Dorsolateral prefrontal cortex (tissue), 120 donors: ENCODE measurements at regions of chr16 and their contacts with region 1.

Region 1: DNA sequence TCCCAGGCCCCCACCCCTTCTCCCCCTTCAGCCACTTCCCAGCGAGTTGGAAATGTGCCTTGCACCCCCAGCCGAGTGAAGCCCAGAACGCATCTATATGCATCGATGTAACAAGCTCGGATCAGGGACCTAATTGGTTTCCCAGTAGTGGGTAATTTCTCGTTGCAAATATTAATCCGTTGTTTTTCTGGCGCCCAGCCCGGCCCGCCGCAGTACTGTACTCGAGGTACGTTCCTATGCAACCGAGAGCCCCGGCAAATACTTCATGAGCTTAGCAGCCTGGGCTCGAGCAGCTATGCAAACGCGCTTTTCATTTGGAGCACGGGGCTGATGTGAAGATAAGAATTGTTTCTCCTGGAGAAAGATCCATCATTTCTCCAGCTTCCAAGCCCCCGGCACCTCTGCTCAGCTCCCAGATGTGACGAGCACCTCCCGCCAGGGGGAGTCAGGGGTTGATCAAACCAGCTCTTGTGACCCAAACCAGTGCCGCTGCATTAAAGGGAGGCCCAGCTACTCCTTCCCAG is 229.8 kb downstream of the KATNIP start:
- DNase-seq: peak in 9 of 10 donors; percentile 56 to 78 (median 69)
- H3K4me3 ChIP-seq: peak overlapping the region in 7 of 59 donors; percentile 2 to 36 (median 7)
- H3K27ac ChIP-seq: peak overlapping the region in 54 of 59 donors; percentile 3 to 84 (median 60)
- H3K27me3 ChIP-seq: no peaks in the 10 kb centered on the region
- CTCF ChIP-seq: peak in 54 of 56 donors; percentile 18 to 79 (median 58)

Region 2: GRCh38 chr16:27703545-27703944 is 76.2 kb before region 1 on chr16:
- intact Hi-C with region 1: loop called in 1 of 2 experiments (anchors 5 kb)
- DNase-seq: peak in 4 of 10 donors; percentile 12 to 26 (median 20)
- H3K4me3 ChIP-seq: no peak overlapping the region
- H3K27ac ChIP-seq: peak overlapping the region in 49 of 59 donors; percentile 4 to 100 (median 62)
- H3K27me3 ChIP-seq: no peaks in the 10 kb centered on the region
- CTCF ChIP-seq: no peak

Region 3: GRCh38 chr16:27839419-27839818 is 59.7 kb after region 1 on chr16:
- intact Hi-C with region 1: no loop called
- DNase-seq: peak in 2 of 10 donors; percentile 0 to 9
- H3K4me3 ChIP-seq: no peak overlapping the region
- H3K27ac ChIP-seq: no peak overlapping the region
- H3K27me3 ChIP-seq: no peaks in the 10 kb centered on the region
- CTCF ChIP-seq: no peak

Region 4: GRCh38 chr16:28063641-28064061 is 283.9 kb after region 1 on chr16 and contains the start of gene GSG1L:
- intact Hi-C with region 1: loop called (anchors 5 to 10 kb)
- DNase-seq: peak in 1 of 10 donors; percentile 54
- H3K4me3 ChIP-seq: peak within 1 kb of the TSS; percentile 7 to 68 (median 51)
- H3K27ac ChIP-seq: peak within 1 kb of the TSS in 16 of 59 donors; percentile 9 to 71 (median 46)
- H3K27me3 ChIP-seq: peaks cover 0 to 41% (median 16%) of the 10 kb centered on the region in 45 donors
- CTCF ChIP-seq: peak in 26 of 56 donors; percentile 6 to 37 (median 26)
- total RNA-seq, gene GSG1L: 5.3 to 19.0 (median 11.5) TPM